Vagina (tissue), 2 donors: ENCODE measurements at regions of chr3 and their contacts with region 1.

Region 1: GRCh38 chr3:78013653-78014052 is 973.8 kb downstream of the ROBO2 start:
- DNase-seq: no peak
- H3K4me3 ChIP-seq: no peak overlapping the region
- H3K27ac ChIP-seq: no peak overlapping the region
- H3K4me1 ChIP-seq: no peaks in the 10 kb centered on the region
- H3K27me3 ChIP-seq: no peaks in the 10 kb centered on the region
- CTCF ChIP-seq: no peak
- POLR2A ChIP-seq: no peak

Region 2: DNA sequence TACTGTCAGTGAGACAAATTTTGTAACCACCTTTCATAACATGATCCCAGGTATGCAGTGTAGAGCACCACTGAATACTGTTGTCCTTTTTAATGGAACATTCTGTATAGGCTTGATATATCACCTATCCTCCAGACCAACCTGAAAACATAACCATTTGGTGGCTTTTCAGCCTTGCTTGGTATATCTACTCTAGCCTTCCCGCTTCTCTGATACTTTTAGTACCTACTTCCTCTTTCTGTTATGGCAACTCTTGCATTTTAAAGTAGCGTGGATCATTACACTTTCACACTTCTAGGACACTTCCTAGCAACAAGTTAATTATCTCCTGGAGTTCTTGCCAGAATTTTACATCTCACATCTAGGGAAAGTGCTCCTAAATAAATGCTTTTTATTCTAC is 1980.7 kb after region 1 on chr3:
- intact Hi-C with region 1: loop called (anchors 5 kb)
- DNase-seq: no peak
- H3K4me3 ChIP-seq: no peak overlapping the region
- H3K27ac ChIP-seq: no peak overlapping the region
- H3K4me1 ChIP-seq: no peaks in the 10 kb centered on the region
- H3K27me3 ChIP-seq: no peaks in the 10 kb centered on the region
- CTCF ChIP-seq: no peak
- POLR2A ChIP-seq: no peak